ENCODE measurements at regions of chr3 and their contacts with region 1.

Region 1: GRCh38 chr3:114839476-114839875 is 307.6 kb downstream of the ZBTB20 start:
- DNase-seq: no peak
- H3K4me3 ChIP-seq: no peak overlapping the region
- H3K27ac ChIP-seq: no peak overlapping the region
- H3K4me1 ChIP-seq: no peaks in the 10 kb centered on the region
- H3K27me3 ChIP-seq: no peaks in the 10 kb centered on the region

Region 2: DNA sequence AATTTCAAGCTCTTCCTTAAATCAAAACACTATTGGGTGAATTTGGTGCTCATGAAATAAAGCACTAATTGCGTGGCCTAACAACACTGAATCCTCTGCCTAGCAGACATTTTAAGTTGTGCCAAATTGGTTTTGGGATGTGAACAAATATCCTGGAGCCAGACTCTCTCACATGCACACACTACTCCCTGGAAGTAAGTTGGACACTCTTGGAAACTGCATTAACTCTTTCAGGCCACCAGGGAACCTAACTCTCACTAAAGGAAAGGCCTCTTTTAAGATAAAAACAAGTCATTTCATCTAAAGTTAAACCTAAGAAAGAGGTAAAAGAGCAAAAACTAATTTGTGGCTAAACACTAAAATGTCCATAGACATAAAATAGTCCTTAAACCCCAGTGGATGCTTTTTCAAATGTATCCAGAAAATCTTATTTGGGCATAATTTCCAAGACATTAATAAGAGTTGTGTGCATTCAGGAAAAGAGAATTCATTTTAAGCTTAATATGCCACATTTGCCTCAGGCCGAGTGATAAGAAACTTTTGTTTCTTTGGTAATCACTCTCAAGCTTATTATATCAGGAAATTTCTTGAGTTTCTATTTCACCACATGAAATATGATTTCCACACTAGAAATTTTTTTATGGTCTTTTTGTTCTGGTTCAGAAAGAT is 245.9 kb after region 1 on chr3:
- in situ Hi-C with region 1: loop called (anchors 10 kb)
- DNase-seq: peak; percentile 56
- H3K4me3 ChIP-seq: peak overlapping the region; percentile 24
- H3K27ac ChIP-seq: peak overlapping the region; percentile 10; the same call in 1 of the 2 replicates
- H3K4me1 ChIP-seq: peaks cover 15% of the 10 kb centered on the region
- H3K27me3 ChIP-seq: no peaks in the 10 kb centered on the region

Region 3: GRCh38 chr3:115169808-115170207 is 330.3 kb after region 1 on chr3:
- in situ Hi-C with region 1: loop called (anchors 10 kb)
- DNase-seq: peak; percentile 35
- H3K4me3 ChIP-seq: no peak overlapping the region
- H3K27ac ChIP-seq: no peak overlapping the region
- H3K4me1 ChIP-seq: 0 out of 2 replicates have a peak, but pooled peaks cover 7% of the 10 kb centered on the region
- H3K27me3 ChIP-seq: no peaks in the 10 kb centered on the region

Region 4: DNA sequence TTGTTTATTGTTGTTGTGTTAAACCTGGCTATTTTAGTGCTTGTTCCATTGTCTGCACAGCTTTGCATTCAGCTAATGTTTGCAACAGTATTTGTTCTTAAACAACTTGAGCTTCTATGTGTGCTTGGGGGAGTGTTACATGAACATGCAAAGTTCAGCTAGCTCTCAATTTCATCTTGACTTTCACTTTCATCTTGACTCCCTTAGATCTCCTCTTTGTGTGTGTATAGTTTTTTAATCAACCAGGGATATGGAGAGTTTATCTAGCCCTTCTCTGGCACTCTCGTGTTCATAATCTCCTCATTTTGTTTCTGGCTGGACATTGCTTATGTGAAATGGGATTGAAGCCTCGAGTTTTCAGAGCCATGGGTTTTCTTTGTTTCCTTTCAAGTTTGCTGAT is 520.1 kb after region 1 on chr3:
- in situ Hi-C with region 1: no loop called
- DNase-seq: no peak
- H3K4me3 ChIP-seq: peak overlapping the region; percentile 45
- H3K27ac ChIP-seq: no peak overlapping the region
- H3K4me1 ChIP-seq: no peaks in the 10 kb centered on the region; the same call in 1 of the 2 replicates
- H3K27me3 ChIP-seq: no peaks in the 10 kb centered on the region

Measured in GM23248 (cell line).